Dorsolateral prefrontal cortex (tissue), 120 donors: ENCODE measurements at regions of chr1 and their contacts with region 1.

Region 1: DNA sequence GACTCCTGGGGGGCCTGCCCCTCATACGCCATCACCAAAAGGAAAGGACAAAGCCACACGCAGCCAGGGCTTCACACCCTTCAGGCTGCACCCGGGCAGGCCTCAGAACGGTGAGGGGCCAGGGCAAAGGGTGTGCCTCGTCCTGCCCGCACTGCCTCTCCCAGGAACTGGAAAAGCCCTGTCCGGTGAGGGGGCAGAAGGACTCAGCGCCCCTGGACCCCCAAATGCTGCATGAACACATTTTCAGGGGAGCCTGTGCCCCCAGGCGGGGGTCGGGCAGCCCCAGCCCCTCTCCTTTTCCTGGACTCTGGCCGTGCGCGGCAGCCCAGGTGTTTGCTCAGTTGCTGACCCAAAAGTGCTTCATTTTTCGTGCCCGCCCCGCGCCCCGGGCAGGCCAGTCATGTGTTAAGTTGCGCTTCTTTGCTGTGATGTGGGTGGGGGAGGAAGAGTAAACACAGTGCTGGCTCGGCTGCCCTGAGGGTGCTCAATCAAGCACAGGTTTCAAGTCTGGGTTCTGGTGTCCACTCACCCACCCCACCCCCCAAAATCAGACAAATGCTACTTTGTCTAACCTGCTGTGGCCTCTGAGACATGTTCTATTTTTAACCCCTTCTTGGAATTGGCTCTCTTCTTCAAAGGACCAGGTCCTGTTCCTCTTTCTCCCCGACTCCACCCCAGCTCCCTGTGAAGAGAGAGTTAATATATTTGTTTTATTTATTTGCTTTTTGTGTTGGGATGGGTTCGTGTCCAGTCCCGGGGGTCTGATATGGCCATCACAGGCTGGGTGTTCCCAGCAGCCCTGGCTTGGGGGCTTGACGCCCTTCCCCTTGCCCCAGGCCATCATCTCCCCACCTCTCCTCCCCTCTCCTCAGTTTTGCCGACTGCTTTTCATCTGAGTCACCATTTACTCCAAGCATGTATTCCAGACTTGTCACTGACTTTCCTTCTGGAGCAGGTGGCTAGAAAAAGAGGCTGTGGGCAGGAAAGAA is 8.2 kb downstream of the PSRC1 start:
- DNase-seq: peak in 2 of 10 donors; percentile 48 to 59
- H3K4me3 ChIP-seq: peak overlapping the region in 9 of 59 donors; percentile 5 to 38 (median 17)
- H3K27ac ChIP-seq: peak overlapping the region; percentile 68 to 100 (median 93)
- H3K27me3 ChIP-seq: no peaks in the 10 kb centered on the region
- CTCF ChIP-seq: no peak

Region 2: DNA sequence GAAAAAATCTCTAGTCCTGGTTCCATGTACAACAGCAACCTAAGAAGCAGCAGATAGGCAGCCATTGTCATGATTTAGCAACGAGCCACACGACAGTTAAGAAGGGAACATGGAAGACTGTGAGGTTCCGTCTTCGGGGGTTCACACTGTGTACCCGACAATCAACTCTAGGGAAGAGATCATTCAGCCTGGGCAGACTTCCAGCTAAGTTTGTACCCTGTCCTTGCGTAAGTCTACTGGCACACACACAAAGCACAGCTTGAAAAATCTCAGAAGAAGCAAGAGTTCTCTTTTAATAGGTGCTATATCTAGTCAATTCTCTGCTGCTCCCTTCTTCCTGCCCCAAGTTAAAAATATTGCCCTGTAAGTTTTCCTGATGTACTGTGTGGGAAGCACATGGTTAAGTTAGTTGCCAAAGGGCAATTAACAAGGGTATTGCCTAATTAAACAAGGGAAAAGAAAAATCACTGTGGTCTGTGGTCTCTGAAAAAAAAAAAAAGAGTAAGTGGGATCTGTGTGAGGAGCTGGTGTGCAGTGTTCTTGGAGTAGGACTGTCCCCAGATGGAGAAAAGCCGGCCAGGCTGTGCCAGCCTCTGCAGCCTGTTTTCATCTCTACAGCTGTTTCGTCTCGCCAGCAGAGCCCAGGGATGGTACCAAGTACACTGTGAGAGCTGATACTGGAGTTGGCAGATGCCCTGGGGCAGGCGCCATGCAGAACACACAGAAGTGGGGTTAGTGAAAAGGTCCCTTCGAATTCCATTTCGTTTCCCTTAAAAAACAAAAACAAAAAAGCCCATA is 38.4 kb after region 1 on chr1:
- intact Hi-C with region 1: loop called in 1 of 2 experiments (anchors 5 kb)
- DNase-seq: peak; percentile 37 to 95 (median 90)
- H3K4me3 ChIP-seq: peak overlapping the region in 7 of 59 donors; percentile 1 to 29 (median 17)
- H3K27ac ChIP-seq: peak overlapping the region; percentile 6 to 100 (median 97)
- H3K27me3 ChIP-seq: no peaks in the 10 kb centered on the region
- CTCF ChIP-seq: peak in 14 of 56 donors; percentile 3 to 36 (median 16)